ENCODE measurements at regions of chr1 and their contacts with region 1.

Region 1: GRCh38 chr1:215132156-215132555 is 49.6 kb downstream of the KCNK2 start:
- DNase-seq: no peak

Region 2: GRCh38 chr1:215156232-215156631 is 24.1 kb after region 1 on chr1:
- intact Hi-C with region 1: loop called in 1 of 2 experiments (anchors 1 kb)
- DNase-seq: no peak